CD14-positive monocyte (primary cell): ENCODE measurements at regions of chr19 and their contacts with region 1.

Region 1: GRCh38 chr19:54674021-54674617 is 11.3 kb downstream of the LILRB4 start:
- DNase-seq: peak; percentile 49 to 61 (median 61)
- H3K4me3 ChIP-seq: no peak overlapping the region
- H3K4me3 Mint-ChIP-seq: no peak overlapping the region
- H3K27ac ChIP-seq: no peak overlapping the region
- H3K27ac Mint-ChIP-seq: no peak overlapping the region
- H3K4me1 ChIP-seq: peaks cover 26 to 51% of the 10 kb centered on the region in 2 donors
- H3K4me1 Mint-ChIP-seq: peaks cover 47% of the 10 kb centered on the region
- H3K27me3 ChIP-seq: peaks cover 12 to 22% of the 10 kb centered on the region in 2 donors
- H3K27me3 Mint-ChIP-seq: peaks cover 19 to 22% (median 19%) of the 10 kb centered on the region in 3 donors
- CTCF ChIP-seq: peak; percentile 94

Region 2: DNA sequence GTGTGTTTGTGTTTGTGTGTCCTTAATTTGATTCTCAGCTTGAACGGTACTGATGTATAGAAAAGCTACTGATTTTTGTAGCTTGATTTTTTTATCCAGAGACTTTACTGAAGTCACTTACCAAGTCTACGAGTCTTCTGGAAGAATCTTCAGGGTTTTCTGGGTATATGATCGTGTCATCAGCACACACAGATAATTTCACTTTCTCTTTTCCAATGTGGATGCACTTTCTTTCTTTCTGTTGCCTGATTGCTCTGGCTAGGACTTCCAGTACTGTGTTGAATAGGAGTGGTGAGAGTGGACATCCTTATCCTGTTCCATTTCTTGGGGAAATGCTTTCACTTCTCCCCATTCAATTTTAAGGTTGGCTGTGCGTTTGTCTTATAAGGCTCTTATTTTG is 51.7 kb before region 1 on chr19:
- intact Hi-C with region 1: no loop called
- DNase-seq: no peak
- H3K4me3 ChIP-seq: no peak overlapping the region
- H3K4me3 Mint-ChIP-seq: peak overlapping the region in 1 of 2 donors; percentile 0
- H3K27ac ChIP-seq: no peak overlapping the region
- H3K27ac Mint-ChIP-seq: peak overlapping the region in 1 of 7 donors; percentile 16
- H3K4me1 ChIP-seq: peaks cover 12 to 22% of the 10 kb centered on the region in 2 donors
- H3K4me1 Mint-ChIP-seq: peaks cover 34% of the 10 kb centered on the region
- H3K27me3 ChIP-seq: no peaks in the 10 kb centered on the region
- H3K27me3 Mint-ChIP-seq: peaks cover 1 to 6% (median 1%) of the 10 kb centered on the region in 3 donors
- CTCF ChIP-seq: no peak

Region 3: DNA sequence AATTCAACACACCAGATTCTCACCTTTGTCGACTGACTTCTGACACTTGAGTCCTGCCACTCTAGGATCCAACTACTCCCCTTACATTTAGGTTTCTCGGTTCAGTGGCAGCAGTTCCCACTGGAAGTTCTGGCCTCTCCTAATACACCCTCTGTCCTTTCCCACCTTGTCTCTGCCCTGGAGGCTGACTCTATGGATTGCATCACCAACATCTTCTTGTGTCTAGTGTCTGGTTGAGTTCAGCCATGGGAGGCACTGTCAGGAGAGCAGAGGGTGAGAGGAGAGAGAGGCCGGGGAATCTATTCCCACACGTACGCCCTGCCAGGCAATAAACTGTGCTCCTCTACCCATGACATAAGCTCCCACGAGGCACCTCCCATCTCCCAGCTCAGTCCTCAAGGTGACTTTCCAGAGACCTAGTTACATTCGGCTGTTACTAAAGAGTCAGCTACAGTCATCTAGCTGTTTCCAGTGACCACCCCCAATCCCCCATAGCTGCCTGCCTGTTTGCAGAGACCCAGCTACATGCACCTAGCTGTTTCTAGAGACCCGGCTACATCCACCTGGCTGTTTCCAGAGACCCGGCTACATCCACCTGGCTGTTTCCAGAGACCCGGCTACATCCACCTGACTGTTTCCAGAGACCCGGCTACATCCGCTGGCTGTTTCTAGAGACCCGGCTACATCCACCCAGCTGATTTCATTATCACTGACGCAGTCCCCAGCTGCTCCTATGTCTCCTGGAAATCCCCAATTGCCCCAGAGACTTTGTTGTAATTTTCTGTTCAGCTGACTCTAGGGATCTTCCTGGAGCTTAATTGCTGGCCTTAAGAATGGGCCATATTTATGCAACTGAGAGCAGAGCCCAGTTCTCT is 19.4 kb before region 1 on chr19:
- intact Hi-C with region 1: loop called in 1 of 2 experiments (anchors 2 kb)
- DNase-seq: peak in 2 of 3 donors; percentile 65 to 80
- H3K4me3 ChIP-seq: no peak overlapping the region
- H3K4me3 Mint-ChIP-seq: peak overlapping the region in 1 of 2 donors; percentile 23
- H3K27ac ChIP-seq: no peak overlapping the region
- H3K27ac Mint-ChIP-seq: peak overlapping the region in 5 of 7 donors; percentile 1 to 50 (median 43)
- H3K4me1 ChIP-seq: peaks cover 10 to 18% of the 10 kb centered on the region in 2 donors
- H3K4me1 Mint-ChIP-seq: peaks cover 33% of the 10 kb centered on the region
- H3K27me3 ChIP-seq: peaks cover 3 to 6% of the 10 kb centered on the region in 2 donors
- H3K27me3 Mint-ChIP-seq: peaks cover 6 to 12% (median 10%) of the 10 kb centered on the region in 3 donors
- CTCF ChIP-seq: no peak

Region 4: DNA sequence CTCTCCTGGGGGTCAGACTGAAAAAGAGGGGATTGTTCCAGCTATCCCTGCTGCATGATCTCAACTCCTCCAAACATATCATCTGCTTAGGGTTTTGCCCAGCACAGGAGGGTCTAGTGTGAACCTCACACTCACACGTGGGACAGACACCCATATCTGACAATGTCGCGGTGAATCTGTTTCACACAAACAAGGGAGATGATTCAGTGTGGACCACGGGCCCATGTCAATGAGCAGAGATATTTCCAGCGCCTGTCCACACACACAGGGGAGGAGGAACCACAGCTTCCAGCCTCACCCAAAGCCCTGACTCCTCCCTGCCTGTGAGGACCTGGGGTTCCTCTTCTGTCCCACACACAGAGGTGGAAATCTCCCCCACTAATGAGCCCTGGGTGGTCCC is 20.5 kb after region 1 on chr19:
- intact Hi-C with region 1: no loop called
- DNase-seq: peak; percentile 40 to 51 (median 43)
- H3K4me3 ChIP-seq: no peak overlapping the region
- H3K4me3 Mint-ChIP-seq: peak overlapping the region in 1 of 2 donors; percentile 50
- H3K27ac ChIP-seq: no peak overlapping the region
- H3K27ac Mint-ChIP-seq: peak overlapping the region in 1 of 7 donors; percentile 40
- H3K4me1 ChIP-seq: peaks cover 51% of the 10 kb centered on the region in 2 donors
- H3K4me1 Mint-ChIP-seq: peaks cover 55% of the 10 kb centered on the region
- H3K27me3 ChIP-seq: peaks cover 0 to 5% of the 10 kb centered on the region in 2 donors
- H3K27me3 Mint-ChIP-seq: peaks cover 4 to 19% (median 7%) of the 10 kb centered on the region in 3 donors
- CTCF ChIP-seq: no peak